ENCODE measurements at regions of chr15 and their contacts with region 1.

Region 1: GRCh38 chr15:101258238-101259144 is 6.6 kb upstream of the CHSY1 start:
- DNase-seq: peak; percentile 77
- H3K4me3 Mint-ChIP-seq: no peak overlapping the region
- H3K27ac Mint-ChIP-seq: no peak overlapping the region
- H3K4me1 Mint-ChIP-seq: peaks cover 5% of the 10 kb centered on the region
- H3K27me3 Mint-ChIP-seq: no peaks in the 10 kb centered on the region
- CTCF ChIP-seq: peak; percentile 85

Region 2: GRCh38 chr15:100627789-100628395 is 630.6 kb before region 1 on chr15:
- CTCF ChIA-PET with region 1: interaction called, 3 read pairs
- POLR2A ChIA-PET with region 1: no interaction called
- intact Hi-C with region 1: loop called (anchors 5 kb)
- DNase-seq: peak; percentile 78
- H3K4me3 Mint-ChIP-seq: no peak overlapping the region
- H3K27ac Mint-ChIP-seq: peak overlapping the region; percentile 41
- H3K4me1 Mint-ChIP-seq: peaks cover 6% of the 10 kb centered on the region
- H3K27me3 Mint-ChIP-seq: no peaks in the 10 kb centered on the region
- CTCF ChIP-seq: peak; percentile 84

Region 3: DNA sequence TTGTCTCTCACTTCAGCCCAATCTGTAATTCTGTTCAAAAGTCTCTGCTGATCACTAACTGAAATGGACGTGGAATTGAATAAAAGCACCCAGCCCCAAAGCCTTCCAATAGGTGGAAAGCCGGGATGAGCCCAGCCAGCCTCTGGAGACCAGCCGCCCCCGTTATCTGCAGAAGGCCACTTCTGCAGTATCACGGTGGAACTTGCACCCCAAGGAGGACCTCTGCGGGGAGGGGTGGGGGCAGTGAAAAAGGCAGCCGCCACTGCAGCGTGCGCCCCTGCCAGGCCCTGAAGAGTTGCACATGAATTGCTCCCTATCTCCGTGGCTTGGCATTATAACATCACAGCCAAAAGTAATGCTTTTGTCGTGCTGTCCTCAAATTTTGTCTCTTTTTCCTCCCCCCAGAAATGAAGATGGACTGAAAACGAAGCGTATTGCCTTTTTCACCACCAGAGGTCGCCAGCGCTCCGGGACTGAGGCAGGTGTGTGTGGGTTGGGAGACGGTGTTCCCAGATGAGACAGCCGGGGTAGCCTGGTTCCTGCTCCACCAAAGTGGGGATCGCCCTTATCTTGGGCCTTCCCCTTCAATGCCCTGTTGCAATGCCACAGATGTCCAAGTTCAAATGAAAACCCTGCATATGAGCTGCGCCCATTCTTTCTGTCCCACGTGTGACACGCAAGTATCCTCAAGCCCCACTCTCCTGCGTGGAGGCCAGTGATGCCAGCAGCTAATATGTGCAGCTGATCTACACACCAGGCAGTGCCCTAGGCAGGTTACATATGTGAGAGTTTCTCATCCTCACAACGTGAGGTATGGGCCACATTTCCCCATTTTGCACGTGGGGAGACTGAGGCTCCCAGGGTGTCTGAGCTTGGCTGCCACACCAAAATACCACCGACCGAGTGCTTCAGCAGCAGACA is 243.3 kb before region 1 on chr15:
- CTCF ChIA-PET with region 1: interaction called, 46 read pairs
- POLR2A ChIA-PET with region 1: interaction called, 5 read pairs
- intact Hi-C with region 1: loop called (anchors 1 kb)
- DNase-seq: peak; percentile 73
- H3K4me3 Mint-ChIP-seq: no peak overlapping the region
- H3K27ac Mint-ChIP-seq: no peak overlapping the region
- H3K4me1 Mint-ChIP-seq: no peaks in the 10 kb centered on the region
- H3K27me3 Mint-ChIP-seq: no peaks in the 10 kb centered on the region
- CTCF ChIP-seq: peak; percentile 82

Region 4: GRCh38 chr15:101088788-101089583 is 169.5 kb before region 1 on chr15:
- CTCF ChIA-PET with region 1: interaction called, 62 read pairs
- POLR2A ChIA-PET with region 1: interaction called, 3 read pairs
- intact Hi-C with region 1: loop called (anchors 1 kb)
- DNase-seq: peak; percentile 61
- H3K4me3 Mint-ChIP-seq: no peak overlapping the region
- H3K27ac Mint-ChIP-seq: no peak overlapping the region
- H3K4me1 Mint-ChIP-seq: no peaks in the 10 kb centered on the region
- H3K27me3 Mint-ChIP-seq: no peaks in the 10 kb centered on the region
- CTCF ChIP-seq: peak; percentile 99

Region 5: DNA sequence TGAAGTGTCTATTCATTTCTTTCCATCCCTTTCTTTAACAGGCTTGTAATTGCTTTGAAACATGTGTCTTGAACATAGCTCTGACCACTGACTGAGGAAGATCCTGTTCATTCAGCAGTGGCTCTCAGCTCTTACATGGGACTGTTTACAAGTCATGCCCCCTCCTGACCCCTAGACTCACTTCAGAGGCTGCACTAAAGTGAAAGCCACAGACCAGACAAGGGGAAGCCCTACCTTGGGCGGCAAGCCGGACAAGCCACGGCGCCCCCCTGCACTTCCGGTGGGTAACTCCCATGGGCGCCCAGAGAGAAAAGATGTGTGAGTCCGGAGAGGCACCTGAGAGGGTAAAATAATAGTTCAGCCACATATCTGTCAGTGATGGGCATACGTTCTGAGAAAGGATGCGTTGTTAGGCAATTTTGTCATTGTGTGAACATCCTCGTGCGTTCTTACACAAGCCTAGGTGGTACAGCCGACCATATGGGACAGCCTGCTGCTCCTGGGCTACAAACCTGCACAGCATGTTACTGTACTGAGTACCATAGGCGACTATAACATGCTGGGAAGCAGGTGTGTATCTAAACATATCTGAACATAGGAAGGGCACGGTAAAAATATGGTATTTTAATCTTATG is 122.8 kb before region 1 on chr15:
- CTCF ChIA-PET with region 1: no interaction called
- POLR2A ChIA-PET with region 1: no interaction called
- intact Hi-C with region 1: no loop called
- DNase-seq: no peak
- H3K4me3 Mint-ChIP-seq: no peak overlapping the region
- H3K27ac Mint-ChIP-seq: no peak overlapping the region
- H3K4me1 Mint-ChIP-seq: peaks cover 8% of the 10 kb centered on the region
- H3K27me3 Mint-ChIP-seq: no peaks in the 10 kb centered on the region
- CTCF ChIP-seq: no peak

Region 6: GRCh38 chr15:101310533-101310932 is 52.0 kb after region 1 on chr15:
- CTCF ChIA-PET with region 1: no interaction called
- POLR2A ChIA-PET with region 1: no interaction called
- intact Hi-C with region 1: no loop called
- DNase-seq: no peak
- H3K4me3 Mint-ChIP-seq: no peak overlapping the region
- H3K27ac Mint-ChIP-seq: no peak overlapping the region
- H3K4me1 Mint-ChIP-seq: no peaks in the 10 kb centered on the region
- H3K27me3 Mint-ChIP-seq: no peaks in the 10 kb centered on the region
- CTCF ChIP-seq: no peak